Ascending aorta (tissue), 2 donors: ENCODE measurements at regions of chr17 and their contacts with region 1.

Region 1: DNA sequence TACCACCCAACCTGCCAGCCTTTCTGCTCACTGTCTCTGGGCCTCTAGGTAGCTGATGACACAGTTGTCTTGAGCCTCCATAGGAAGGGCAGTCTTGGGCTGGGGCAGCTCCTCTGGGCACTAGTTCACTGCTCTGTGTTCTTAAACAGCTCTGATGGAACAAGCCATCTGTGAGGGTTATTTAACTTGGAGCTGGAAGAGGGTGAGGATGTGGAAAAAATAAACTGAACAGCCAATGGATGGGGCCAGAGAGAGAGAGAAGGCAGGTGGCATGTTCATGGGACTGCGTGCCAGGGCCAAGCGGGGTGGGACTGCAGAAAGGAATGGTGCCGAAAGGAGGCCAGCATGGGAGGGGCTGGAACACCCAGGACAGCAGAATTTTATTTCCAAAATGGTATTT is 52.6 kb downstream of the HIC1 start:
- DNase-seq: no peak
- H3K4me3 ChIP-seq: no peak overlapping the region
- H3K27ac ChIP-seq: peak overlapping the region; percentile 51 to 76
- H3K4me1 ChIP-seq: peaks cover 10 to 22% of the 10 kb centered on the region in 2 donors
- H3K27me3 ChIP-seq: no peaks in the 10 kb centered on the region
- CTCF ChIP-seq: no peak

Region 2: DNA sequence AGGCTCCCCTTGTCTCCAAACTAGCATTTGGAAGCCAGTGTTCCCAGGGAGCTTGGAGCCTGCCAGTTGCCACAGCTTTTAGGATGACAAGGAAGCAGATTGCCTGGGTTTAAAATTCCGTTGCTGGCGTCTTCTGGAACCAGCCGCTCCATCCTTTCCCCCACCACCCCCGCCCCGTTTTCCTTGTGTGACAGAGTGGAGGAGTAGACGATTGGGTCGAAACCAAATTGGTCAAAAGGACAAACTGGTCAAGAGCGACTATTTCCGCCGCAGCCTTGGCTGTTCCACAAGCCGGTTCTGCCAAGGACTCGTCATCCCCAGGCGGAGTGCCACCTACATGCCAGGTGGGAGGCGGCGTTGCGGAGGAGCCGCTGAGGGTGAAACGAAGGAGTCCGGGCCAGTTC is 186.6 kb before region 1 on chr17:
- intact Hi-C with region 1: no loop called
- DNase-seq: no peak
- H3K4me3 ChIP-seq: no peak overlapping the region
- H3K27ac ChIP-seq: no peak overlapping the region
- H3K4me1 ChIP-seq: no peaks in the 10 kb centered on the region
- H3K27me3 ChIP-seq: no peaks in the 10 kb centered on the region
- CTCF ChIP-seq: no peak

Region 3: DNA sequence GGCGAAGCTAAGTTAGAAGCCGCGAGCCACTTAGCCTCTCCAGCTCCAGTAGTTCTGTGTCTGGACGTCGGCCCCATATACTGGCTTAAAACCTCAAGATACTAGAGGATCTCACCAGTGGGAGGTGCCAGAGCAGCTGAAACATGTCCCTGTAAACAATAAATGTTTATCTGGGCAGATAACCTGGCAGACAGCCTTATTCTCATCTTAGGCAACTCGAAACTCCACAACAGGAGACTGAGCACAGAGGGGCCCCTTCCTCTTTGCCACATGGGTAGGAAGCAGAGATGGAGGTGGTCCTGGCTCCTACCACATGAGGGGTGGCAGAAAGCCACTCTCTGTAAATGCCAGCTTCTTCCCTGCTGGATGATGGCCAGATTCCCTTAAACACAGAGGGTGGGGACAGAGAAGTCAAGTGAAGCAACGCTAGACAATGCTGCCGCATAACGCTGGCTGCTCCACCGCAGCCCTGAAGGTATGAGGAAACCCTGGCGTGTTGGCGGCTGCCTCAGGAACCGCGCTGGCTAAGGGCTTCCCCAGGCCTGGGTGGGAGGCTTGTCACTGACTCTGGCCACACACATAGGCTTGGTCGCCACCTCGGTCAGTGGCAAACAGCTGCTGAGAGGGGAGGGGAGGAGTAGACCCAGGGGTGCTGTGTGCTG is 15.3 kb after region 1 on chr17:
- intact Hi-C with region 1: no loop called
- DNase-seq: peak; percentile 17 to 81
- H3K4me3 ChIP-seq: peak overlapping the region in 1 of 2 donors; percentile 13
- H3K27ac ChIP-seq: peak overlapping the region; percentile 31 to 54
- H3K4me1 ChIP-seq: peaks cover 8 to 19% of the 10 kb centered on the region in 2 donors
- H3K27me3 ChIP-seq: no peaks in the 10 kb centered on the region
- CTCF ChIP-seq: peak in 1 of 3 experiments; percentile 2

Region 4: DNA sequence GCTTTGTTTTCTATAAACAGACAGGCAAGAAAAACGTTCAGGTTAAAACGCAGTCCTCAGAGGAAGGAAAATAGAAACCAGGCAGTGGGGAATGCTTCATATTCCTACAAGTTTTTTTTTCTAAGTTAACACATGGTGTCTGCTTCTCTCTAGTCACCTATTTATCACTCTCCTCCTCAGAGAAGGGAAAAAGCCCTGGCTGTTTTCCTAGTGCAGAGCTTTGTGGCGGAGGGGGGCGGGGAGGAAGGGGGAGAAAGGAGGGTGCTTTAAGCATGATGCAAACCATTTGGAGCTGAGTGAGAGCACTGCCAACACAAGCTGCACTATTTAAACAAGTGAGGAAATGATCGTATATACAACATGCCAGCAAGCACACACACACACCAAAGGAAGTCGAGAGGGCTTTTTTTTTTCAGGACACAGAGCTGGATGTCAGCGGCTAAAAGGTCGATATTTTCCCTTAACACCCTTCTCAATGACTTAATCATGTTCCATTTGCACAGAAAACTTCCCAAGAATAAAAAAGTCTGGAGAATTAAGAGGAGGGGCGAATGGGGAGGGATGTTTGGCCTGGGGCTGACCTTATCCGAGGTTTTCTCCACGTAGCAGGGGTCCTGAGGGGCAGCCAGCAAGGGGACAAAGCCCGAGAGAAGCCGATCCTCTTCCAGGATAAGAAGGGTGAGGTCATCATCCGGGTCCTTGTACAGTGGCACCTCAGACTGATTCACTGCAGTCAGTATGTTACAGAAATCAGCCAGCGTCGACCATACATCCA is 64.8 kb after region 1 on chr17:
- intact Hi-C with region 1: loop called (anchors 5 kb)
- DNase-seq: peak; percentile 36 to 83
- H3K4me3 ChIP-seq: peak overlapping the region; percentile 26 to 40
- H3K27ac ChIP-seq: peak overlapping the region; percentile 82 to 84
- H3K4me1 ChIP-seq: peaks cover 23 to 52% of the 10 kb centered on the region in 2 donors
- H3K27me3 ChIP-seq: no peaks in the 10 kb centered on the region
- CTCF ChIP-seq: no peak